ENCODE measurements at regions of chr11 and their contacts with region 1.

Region 1: GRCh38 chr11:118659314-118659952 is 20.0 kb downstream of the TREH start:
- DNase-seq: peak; percentile 81 to 92
- H3K4me3 ChIP-seq: no peak overlapping the region
- H3K27ac ChIP-seq: no peak overlapping the region
- H3K4me1 ChIP-seq: peaks cover 11% of the 10 kb centered on the region
- H3K27me3 ChIP-seq: no peaks in the 10 kb centered on the region
- CTCF ChIP-seq: peak; percentile 98

Region 2: DNA sequence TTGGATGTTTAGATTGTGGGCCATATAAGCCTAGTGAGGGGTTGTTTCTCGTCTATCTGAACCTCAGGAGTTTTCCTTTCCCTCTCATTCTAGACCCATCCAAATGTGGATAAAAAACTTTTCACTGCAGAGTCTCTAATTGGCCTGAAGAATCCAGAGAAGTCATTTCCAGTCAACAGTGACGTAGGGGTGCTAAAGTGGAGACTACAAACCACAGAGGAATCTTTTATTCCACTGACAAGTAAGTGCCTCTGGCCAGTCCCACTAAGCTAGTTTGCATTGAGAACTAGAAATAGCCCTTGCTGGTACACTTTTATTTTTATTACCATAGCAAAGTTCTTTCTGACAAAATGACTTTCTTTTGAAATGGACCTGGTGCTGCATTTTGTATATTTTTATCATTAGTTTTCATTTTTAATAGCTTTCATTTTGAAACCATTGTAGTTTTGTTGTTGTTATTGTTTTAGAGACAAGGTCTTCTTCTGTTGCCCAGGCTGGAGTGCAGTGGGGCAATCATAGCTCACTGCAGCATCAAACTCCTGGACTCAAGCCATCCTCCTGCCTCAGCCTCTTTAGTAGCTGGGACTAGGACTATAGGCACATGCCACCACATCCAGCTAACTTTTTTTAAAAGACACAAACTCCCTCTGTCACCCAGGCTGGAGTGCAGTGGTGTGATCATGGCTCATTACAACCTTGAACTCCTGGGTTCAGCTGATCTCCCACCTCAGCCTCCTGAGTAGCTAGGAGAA is 66.6 kb before region 1 on chr11:
- CTCF ChIA-PET with region 1: no interaction called
- POLR2A ChIA-PET with region 1: interaction called, 3 read pairs
- intact Hi-C with region 1: loop called (anchors 2 kb)
- DNase-seq: no peak
- H3K4me3 ChIP-seq: no peak overlapping the region
- H3K27ac ChIP-seq: no peak overlapping the region
- H3K4me1 ChIP-seq: no peaks in the 10 kb centered on the region
- H3K27me3 ChIP-seq: no peaks in the 10 kb centered on the region
- CTCF ChIP-seq: no peak

Region 3: DNA sequence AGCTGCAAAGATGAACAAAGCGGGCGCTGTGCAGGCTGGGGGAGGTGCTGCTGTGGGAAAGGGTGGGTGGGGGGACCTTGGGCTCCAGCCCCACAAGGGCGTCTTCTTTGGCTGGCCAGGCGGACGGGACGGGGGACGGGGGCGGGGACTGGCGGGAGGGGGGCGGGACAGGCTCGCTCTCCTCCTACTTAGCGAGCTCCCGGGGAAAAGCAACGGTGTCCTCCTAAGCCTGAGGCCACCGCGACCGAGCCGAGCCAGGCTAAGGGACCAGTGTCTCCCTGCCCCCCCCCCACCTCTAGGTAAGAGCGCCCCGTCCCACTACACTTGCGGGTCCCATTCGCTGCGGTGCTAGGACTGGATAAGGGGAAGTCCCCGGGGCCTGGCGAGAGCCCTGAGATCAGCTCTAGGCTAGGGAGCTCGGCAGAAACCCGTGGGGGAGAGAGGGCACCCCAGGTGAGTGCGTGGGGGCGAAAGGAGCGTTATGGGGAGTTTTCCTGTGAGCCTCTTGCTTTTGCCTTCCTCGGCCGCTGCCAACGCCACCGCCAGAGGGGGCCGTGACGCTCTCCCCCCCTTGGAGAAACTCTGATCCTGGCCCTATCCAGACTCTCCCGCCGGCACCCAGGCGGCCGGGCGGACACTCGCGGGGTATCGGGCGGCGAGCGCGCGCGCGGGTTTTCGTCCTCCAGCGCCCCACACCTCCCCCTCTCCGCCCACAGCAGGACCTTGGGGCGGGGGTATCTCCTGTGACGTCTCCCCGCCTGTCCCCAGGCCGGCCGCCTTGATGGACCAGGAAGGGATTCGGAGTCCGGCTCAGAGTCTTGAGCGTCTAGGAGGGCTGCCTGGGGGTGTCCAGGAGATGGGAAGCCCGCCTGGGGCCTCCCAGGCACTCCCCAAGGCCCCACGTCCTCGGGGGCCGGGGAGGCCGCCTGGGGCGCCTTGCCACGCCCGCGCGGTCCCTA is 51.8 kb before region 1 on chr11 and contains the start of gene PHLDB1:
- CTCF ChIA-PET with region 1: no interaction called
- POLR2A ChIA-PET with region 1: no interaction called
- intact Hi-C with region 1: loop called (anchors 1 kb)
- DNase-seq: peak in 1 of 2 experiments; percentile 61
- H3K4me3 ChIP-seq: peak within 1 kb of the TSS; percentile 70
- H3K27ac ChIP-seq: no peak within 1 kb of the TSS
- H3K4me1 ChIP-seq: peaks cover 6% of the 10 kb centered on the region; the same call in 1 of the 2 replicates
- H3K27me3 ChIP-seq: peaks cover 13% of the 10 kb centered on the region; the same call in 1 of the 2 replicates
- CTCF ChIP-seq: peak; percentile 63
- total RNA-seq, gene PHLDB1: 122 and 125 TPM in 2 replicates

Region 4: GRCh38 chr11:118621071-118621783 is 38.2 kb before region 1 on chr11:
- CTCF ChIA-PET with region 1: no interaction called
- POLR2A ChIA-PET with region 1: no interaction called
- intact Hi-C with region 1: loop called (anchors 2 kb)
- DNase-seq: peak; percentile 82 to 91
- H3K4me3 ChIP-seq: peak overlapping the region; percentile 67
- H3K27ac ChIP-seq: peak overlapping the region; percentile 79
- H3K4me1 ChIP-seq: peaks cover 62% of the 10 kb centered on the region
- H3K27me3 ChIP-seq: no peaks in the 10 kb centered on the region
- CTCF ChIP-seq: no peak

Region 5: DNA sequence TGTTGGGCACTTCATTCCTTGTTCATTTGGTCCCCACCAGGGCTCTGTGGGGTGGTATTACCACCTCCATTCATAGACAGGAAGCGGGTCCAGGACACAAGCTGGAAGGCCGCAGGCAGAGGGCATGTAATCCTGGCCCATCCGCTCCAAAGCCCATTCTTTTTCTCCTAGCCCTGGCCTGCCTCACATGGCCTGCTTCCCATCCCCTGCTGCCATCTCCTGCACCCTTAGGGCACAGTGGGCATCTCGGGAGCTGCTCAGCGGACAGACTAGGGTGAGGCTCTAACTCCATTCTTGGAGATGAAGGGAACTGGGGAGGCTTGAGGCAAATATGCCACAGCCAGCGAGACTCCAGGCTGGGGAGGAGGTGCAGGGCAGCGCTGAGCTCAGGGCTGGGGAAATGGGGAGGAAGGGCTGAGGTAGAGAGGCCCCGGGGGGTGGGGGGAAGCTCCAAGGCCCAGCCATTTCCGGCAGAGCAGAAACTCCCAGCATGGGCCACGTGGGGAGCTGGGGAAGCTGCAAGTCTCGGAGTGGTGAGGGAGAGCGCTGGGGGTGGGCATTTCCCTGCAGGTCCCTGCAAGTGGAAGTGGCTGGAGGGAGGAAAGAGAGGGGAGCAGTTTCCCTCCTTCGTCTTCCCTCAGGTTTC is 280.6 kb after region 1 on chr11:
- CTCF ChIA-PET with region 1: interaction called, 10 read pairs
- POLR2A ChIA-PET with region 1: no interaction called
- intact Hi-C with region 1: no loop called
- DNase-seq: peak in 1 of 2 experiments; percentile 19
- H3K4me3 ChIP-seq: no peak overlapping the region
- H3K27ac ChIP-seq: no peak overlapping the region
- H3K4me1 ChIP-seq: peaks cover 19% of the 10 kb centered on the region
- H3K27me3 ChIP-seq: no peaks in the 10 kb centered on the region
- CTCF ChIP-seq: no peak

Region 6: DNA sequence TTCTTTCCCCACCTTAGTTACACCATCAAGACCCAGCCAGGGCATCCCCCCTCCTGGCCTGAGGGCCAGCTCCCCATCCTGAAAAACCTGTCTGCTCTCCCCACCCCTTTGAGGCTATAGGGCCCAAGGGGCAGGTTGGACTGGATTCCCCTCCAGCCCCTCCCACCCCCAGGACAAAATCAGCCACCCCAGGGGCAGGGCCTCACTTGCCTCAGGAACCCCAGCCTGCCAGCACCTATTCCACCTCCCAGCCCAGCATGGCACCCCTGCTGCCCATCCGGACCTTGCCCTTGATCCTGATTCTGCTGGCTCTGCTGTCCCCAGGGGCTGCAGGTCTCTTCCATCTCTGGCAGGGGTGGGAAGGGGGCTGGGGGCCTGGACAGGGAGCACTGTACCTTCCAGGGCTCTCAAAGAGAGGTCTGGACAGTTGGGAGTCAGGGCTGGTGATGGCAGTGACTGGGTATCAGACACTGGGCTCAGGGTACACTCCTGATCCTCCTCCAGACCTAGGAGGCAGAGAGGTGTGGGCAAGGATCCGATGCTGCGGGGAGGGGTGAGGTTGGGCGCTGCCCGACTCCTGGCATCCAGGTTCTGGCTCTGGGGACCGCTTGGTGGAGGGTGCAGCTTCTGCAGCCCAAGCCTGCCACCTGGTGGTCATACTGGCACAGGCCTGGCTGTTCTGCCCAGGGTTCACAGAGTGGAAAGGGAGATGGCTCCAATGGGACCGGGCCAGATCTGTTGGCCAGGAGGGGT is 296.8 kb after region 1 on chr11 and contains the start of gene UPK2:
- CTCF ChIA-PET with region 1: no interaction called
- POLR2A ChIA-PET with region 1: no interaction called
- intact Hi-C with region 1: loop called (anchors 1 kb)
- DNase-seq: peak; percentile 92 to 93
- H3K4me3 ChIP-seq: peak within 1 kb of the TSS; percentile 49
- H3K27ac ChIP-seq: peak within 1 kb of the TSS; percentile 62
- H3K4me1 ChIP-seq: peaks cover 26% of the 10 kb centered on the region
- H3K27me3 ChIP-seq: no peaks in the 10 kb centered on the region
- CTCF ChIP-seq: peak; percentile 97
- total RNA-seq, gene UPK2: 17.1 and 23.2 TPM in 2 replicates

Region 7: GRCh38 chr11:119084663-119085436 is 425.4 kb after region 1 on chr11 and contains the start of gene HMBS:
- CTCF ChIA-PET with region 1: no interaction called
- POLR2A ChIA-PET with region 1: interaction called, 14 read pairs
- intact Hi-C with region 1: no loop called
- DNase-seq: peak; percentile 92 to 94
- H3K4me3 ChIP-seq: peak within 1 kb of the TSS; percentile 86
- H3K27ac ChIP-seq: peak within 1 kb of the TSS; percentile 53
- H3K4me1 ChIP-seq: peaks cover 24% of the 10 kb centered on the region
- H3K27me3 ChIP-seq: no peaks in the 10 kb centered on the region
- CTCF ChIP-seq: no peak
- total RNA-seq, gene HMBS: 49.3 and 54.9 TPM in 2 replicates